Pancreas (tissue), 10 donors: ENCODE measurements at regions of chr1 and their contacts with region 1.

Region 1: GRCh38 chr1:93629099-93630059 is 52.3 kb downstream of the BCAR3 start:
- DNase-seq: peak in 2 of 6 donors; percentile 32 to 65
- ATAC-seq: peak; percentile 87 to 98 (median 96)
- H3K4me3 ChIP-seq: no peak overlapping the region
- H3K27ac ChIP-seq: no peak overlapping the region
- H3K4me1 ChIP-seq: no peaks in the 10 kb centered on the region
- H3K27me3 ChIP-seq: no peaks in the 10 kb centered on the region
- CTCF ChIP-seq: peak; percentile 39 to 69 (median 68)

Region 2: DNA sequence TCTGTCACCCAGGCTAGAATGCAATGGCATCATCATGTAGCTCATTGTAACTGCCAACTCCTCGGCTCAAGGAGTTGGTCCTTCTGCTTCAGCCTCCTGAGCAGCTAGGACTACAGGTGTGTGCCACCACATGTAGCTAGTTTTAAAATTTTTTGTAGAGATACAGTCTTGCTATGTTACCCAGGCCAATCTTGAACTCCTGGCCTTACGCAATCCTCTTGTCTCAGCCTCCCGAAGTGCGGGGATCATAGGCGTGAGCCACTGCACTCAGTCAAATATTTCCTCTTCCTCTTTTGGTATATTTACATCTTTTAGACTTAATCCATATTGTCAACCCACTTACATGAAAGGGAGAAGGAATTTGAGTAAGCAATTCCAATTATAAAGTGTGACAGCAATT is 965.6 kb before region 1 on chr1:
- intact Hi-C with region 1: no loop called
- DNase-seq: no peak
- ATAC-seq: no peak
- H3K4me3 ChIP-seq: no peak overlapping the region
- H3K27ac ChIP-seq: no peak overlapping the region
- H3K4me1 ChIP-seq: no peaks in the 10 kb centered on the region
- H3K27me3 ChIP-seq: no peaks in the 10 kb centered on the region
- CTCF ChIP-seq: no peak

Region 3: DNA sequence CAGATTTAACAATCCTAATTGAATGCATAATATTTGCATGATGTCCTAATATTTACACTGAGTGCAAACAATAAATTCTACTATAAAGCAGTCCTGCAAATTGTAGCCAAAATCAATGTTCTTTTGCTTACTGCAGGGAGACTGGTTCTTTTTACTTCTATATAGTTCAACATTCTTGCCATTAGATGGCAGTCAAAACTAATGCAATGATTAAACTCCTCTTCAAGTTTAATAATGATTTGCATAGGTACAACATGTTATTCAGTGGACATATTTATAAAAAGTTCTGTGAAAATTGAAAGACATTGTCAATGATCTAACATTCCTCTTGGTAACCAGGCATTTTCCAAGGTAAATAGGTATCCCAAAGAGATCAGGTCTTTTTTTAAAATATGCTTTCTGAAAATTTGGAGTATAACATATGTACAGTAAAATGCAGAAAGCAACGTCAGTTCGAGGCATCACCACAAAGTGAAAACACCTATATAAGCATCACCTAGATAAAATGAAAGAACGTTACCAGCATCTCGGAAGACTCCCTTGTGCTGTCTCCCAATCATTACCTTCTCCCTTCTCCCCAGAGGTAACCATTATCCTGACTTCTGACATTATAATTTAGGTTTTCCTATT is 191.3 kb before region 1 on chr1:
- intact Hi-C with region 1: loop called in 1 of 3 experiments (anchors 10 kb)
- DNase-seq: no peak
- ATAC-seq: peak; percentile 74 to 90 (median 82)
- H3K4me3 ChIP-seq: no peak overlapping the region
- H3K27ac ChIP-seq: no peak overlapping the region
- H3K4me1 ChIP-seq: peaks cover 4 to 12% (median 5%) of the 10 kb centered on the region in 3 donors
- H3K27me3 ChIP-seq: no peaks in the 10 kb centered on the region
- CTCF ChIP-seq: peak; percentile 11 to 66 (median 52)

Region 4: GRCh38 chr1:93708734-93709481 is 79.5 kb after region 1 on chr1:
- intact Hi-C with region 1: no loop called
- DNase-seq: peak in 3 of 6 donors; percentile 13 to 29 (median 24)
- ATAC-seq: peak; percentile 50 to 92 (median 84)
- H3K4me3 ChIP-seq: no peak overlapping the region
- H3K27ac ChIP-seq: no peak overlapping the region
- H3K4me1 ChIP-seq: peaks cover 0 to 4% (median 0%) of the 10 kb centered on the region in 3 donors
- H3K27me3 ChIP-seq: no peaks in the 10 kb centered on the region
- CTCF ChIP-seq: no peak

Region 5: DNA sequence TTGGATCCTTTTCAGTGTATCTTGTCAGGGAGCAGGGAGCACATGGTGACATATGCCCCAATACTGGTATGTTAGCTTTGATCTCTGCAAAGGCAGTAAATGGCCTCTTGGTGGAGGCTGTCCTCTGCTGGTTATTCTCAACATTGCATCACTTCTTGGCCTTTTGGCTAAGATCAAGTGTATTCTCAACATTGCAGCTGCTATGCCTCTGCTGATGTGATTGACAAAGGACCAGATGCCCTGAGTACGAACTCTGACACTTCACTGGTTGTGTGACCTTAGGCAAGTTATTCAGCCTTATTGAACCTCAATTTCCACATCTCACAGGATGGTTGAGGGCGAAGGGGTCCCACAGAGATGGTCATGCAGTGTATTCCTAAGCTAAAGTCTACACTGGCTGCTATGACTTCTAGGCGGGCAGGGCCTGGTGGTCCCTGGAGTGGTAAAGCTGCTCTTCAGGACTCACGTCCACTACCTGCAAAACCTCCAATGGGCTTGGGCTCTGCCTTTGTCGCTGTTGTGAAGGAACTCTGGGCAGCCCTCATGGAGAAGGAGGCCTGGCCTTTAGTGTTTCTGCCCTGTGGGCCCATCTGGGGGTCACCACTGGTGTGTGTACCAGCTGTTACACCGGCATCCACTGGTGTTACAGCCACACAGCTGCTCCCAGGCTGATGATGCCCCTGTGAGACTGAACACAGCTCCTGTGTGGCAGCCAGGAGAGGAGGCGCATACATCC is 184.8 kb after region 1 on chr1:
- intact Hi-C with region 1: loop called in 2 of 3 experiments (anchors 5 to 10 kb)
- DNase-seq: peak in 3 of 6 donors; percentile 24 to 73 (median 46)
- ATAC-seq: peak; percentile 79 to 96 (median 94)
- H3K4me3 ChIP-seq: no peak overlapping the region
- H3K27ac ChIP-seq: no peak overlapping the region
- H3K4me1 ChIP-seq: no peaks in the 10 kb centered on the region
- H3K27me3 ChIP-seq: no peaks in the 10 kb centered on the region
- CTCF ChIP-seq: peak; percentile 59 to 93 (median 84)